WTC11 (cell line): ENCODE measurements at regions of chr7 and their contacts with region 1.

Region 1: DNA sequence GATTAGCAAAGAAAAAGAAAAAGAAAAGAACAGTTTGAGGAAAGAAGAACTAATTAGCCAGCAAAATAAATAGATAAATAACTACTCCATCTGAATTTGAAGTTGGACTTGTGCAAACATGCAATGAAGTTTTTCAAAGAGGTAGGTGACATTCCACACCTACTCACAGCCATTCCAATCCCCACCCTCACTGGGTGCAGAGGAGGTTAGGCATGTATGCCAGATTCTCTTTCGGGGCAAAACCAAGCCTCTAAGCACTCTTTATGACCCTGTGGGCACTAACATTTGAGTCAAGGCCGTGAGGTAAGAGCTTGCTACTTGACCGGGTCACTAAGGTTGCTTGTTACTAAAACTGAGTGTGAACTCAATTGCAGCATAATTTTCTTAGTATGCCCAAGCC is 108.4 kb upstream of the SEMA3A start:
- DNase-seq: no peak
- ATAC-seq: peak; percentile 53; the same call in 1 of the 2 replicates
- H3K4me3 Mint-ChIP-seq: no peak overlapping the region
- H3K27ac Mint-ChIP-seq: no peak overlapping the region
- H3K4me1 Mint-ChIP-seq: peaks cover 10% of the 10 kb centered on the region
- H3K27me3 Mint-ChIP-seq: no peaks in the 10 kb centered on the region
- CTCF ChIP-seq: no peak

Region 2: GRCh38 chr7:84364708-84365107 is 61.8 kb after region 1 on chr7:
- CTCF ChIA-PET with region 1: no interaction called
- POLR2A ChIA-PET with region 1: no interaction called
- DNase-seq: no peak
- ATAC-seq: peak; percentile 55; the same call in 1 of the 2 replicates
- H3K4me3 Mint-ChIP-seq: no peak overlapping the region
- H3K27ac Mint-ChIP-seq: no peak overlapping the region
- H3K4me1 Mint-ChIP-seq: peaks cover 4% of the 10 kb centered on the region
- H3K27me3 Mint-ChIP-seq: no peaks in the 10 kb centered on the region
- CTCF ChIP-seq: no peak

Region 3: DNA sequence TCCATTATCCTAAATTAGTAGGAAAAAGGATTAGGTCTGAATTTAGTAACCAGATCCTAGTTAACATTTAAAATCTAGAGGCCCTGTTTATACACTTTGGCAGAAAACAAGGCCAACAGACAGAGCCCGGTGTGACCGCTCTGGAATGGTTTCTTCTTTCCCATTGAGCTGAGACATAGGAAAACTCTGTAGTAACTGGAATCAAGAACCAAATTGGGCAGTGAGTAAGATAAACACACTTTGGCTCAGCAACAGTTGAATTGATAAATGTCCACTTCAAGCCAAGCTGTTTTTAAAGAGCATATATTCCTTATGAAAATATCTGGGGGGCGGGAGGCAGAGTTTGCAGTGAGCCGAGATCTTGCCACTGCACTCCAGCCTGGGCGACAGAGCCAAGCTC is 235.3 kb after region 1 on chr7:
- CTCF ChIA-PET with region 1: no interaction called
- POLR2A ChIA-PET with region 1: interaction called, 10 read pairs
- DNase-seq: no peak
- ATAC-seq: no peak
- H3K4me3 Mint-ChIP-seq: no peak overlapping the region
- H3K27ac Mint-ChIP-seq: no peak overlapping the region
- H3K4me1 Mint-ChIP-seq: peaks cover 2% of the 10 kb centered on the region
- H3K27me3 Mint-ChIP-seq: no peaks in the 10 kb centered on the region
- CTCF ChIP-seq: no peak

Region 4: GRCh38 chr7:84675633-84676034 is 372.7 kb after region 1 on chr7:
- CTCF ChIA-PET with region 1: no interaction called
- POLR2A ChIA-PET with region 1: no interaction called
- DNase-seq: no peak
- ATAC-seq: no peak
- H3K4me3 Mint-ChIP-seq: no peak overlapping the region
- H3K27ac Mint-ChIP-seq: no peak overlapping the region
- H3K4me1 Mint-ChIP-seq: peaks cover 10% of the 10 kb centered on the region
- H3K27me3 Mint-ChIP-seq: no peaks in the 10 kb centered on the region
- CTCF ChIP-seq: no peak